H1 (cell line): ENCODE measurements at regions of chr13 and their contacts with region 1.

Region 1: GRCh38 chr13:26698392-26699196 is 62.0 kb downstream of the GPR12 start:
- DNase-seq: peak; percentile 73 to 98
- H3K4me3 ChIP-seq: peak overlapping the region in 1 of 4 experiments; percentile 39; a peak in 2 of 8 replicates
- H3K27ac ChIP-seq: no peak overlapping the region
- H3K4me1 ChIP-seq: peaks cover 0 to 4% (median 1%) of the 10 kb centered on the region in 4 experiments; a peak in 1 of 7 replicates
- H3K27me3 ChIP-seq: no peaks in the 10 kb centered on the region
- CTCF ChIP-seq: peak; percentile 86 to 96 (median 95)
- EP300 ChIP-seq: no peak
- POLR2A ChIP-seq: no peak
- RAD21 ChIP-seq: peak; percentile 98 to 99

Region 2: DNA sequence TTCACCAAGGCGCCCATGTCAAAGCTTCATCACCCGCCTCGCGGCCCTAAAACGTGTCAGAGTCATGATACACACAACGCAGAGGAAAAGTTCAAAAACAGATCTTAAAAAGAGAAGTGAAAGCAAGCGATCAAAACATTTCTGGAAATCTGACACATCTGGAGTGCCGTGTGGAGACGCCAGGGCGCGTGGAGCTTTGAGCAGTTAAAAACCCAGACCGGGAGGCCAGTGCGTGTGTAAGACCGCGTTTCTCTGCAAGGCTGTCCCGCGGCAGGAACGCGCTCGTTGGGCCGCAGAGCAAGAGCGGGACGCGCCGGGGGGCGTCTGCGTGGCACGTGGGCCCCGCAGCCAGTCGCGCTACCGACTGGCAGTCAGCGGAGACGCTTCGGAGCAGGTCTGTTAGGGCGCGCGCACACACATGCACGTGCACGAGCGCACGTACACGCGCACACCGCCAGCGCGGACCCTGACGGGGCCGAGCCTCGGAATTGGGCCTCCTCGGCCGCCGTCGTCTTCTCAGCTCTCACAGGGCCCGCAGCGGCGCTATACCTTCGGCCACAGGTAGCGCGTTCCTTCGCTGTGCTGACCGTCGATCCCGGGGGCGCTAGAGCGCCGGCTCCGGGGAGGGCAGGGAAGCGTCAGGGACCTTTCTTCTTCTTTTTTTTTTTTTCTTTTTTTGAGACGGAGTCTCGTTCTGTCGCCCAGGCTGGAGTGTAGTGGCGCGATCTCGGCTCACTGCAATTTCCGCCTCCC is 512.3 kb before region 1 on chr13:
- CTCF ChIA-PET with region 1: interaction called, 12 read pairs
- POLR2A ChIA-PET with region 1: no interaction called
- DNase-seq: peak; percentile 90 to 91
- H3K4me3 ChIP-seq: peak overlapping the region; percentile 50 to 73 (median 62)
- H3K27ac ChIP-seq: no peak overlapping the region
- H3K4me1 ChIP-seq: peaks cover 0 to 4% (median 1%) of the 10 kb centered on the region in 4 experiments; a peak in 2 of 7 replicates
- H3K27me3 ChIP-seq: peaks cover 0 to 7% (median 1%) of the 10 kb centered on the region in 4 experiments; a peak in 4 of 7 replicates
- CTCF ChIP-seq: peak; percentile 59 to 87 (median 64)
- EP300 ChIP-seq: no peak
- POLR2A ChIP-seq: no peak
- RAD21 ChIP-seq: peak; percentile 38 to 50; a peak in 2 of 4 replicates

Region 3: DNA sequence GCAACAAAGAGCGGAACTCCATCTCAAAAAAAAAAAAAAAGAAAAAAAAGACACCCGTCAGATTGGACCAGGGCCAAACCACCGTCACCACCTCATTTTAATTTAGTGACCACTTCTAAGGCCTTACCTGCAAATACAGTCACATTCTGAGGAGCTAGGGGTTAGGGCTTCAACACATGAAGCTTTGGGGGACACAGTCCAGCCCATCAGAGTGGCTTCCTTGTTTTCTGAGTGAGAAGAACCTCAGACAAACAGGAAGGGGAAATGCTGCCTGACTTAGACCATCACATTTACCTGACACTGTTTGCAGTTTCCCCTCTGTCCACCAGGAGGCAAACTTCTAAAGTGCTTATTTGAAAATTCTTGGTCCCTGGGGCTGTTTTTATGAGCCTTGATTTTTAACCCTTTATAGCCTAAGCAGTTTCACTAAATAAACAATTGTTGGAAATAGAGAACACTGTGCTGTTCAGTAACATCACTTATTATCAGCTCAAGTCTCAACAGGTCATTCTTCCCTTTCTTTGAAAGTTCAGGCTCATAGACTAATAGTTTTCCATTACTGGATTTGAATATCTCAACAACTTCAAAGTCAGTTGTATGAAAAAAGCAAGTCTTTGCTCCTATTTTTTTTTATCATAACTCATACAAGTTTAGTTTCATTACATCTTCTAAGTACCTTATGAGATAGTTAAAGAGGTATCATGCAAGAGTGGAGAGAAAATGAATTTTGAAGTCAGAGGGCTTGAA is 216.0 kb before region 1 on chr13:
- CTCF ChIA-PET with region 1: interaction called, 23 read pairs
- POLR2A ChIA-PET with region 1: no interaction called
- DNase-seq: peak; percentile 47 to 83
- H3K4me3 ChIP-seq: no peak overlapping the region
- H3K27ac ChIP-seq: no peak overlapping the region
- H3K4me1 ChIP-seq: peaks cover 0 to 3% (median under 1%) of the 10 kb centered on the region in 4 experiments; a peak in 3 of 7 replicates
- H3K27me3 ChIP-seq: no peaks in the 10 kb centered on the region
- CTCF ChIP-seq: peak; percentile 6 to 84 (median 76)
- EP300 ChIP-seq: no peak
- POLR2A ChIP-seq: no peak
- RAD21 ChIP-seq: peak; percentile 68 to 80

Region 4: GRCh38 chr13:26656919-26657318 is 41.7 kb before region 1 on chr13:
- CTCF ChIA-PET with region 1: interaction called, 48 read pairs
- POLR2A ChIA-PET with region 1: interaction called, 3 read pairs
- DNase-seq: no peak
- H3K4me3 ChIP-seq: no peak overlapping the region
- H3K27ac ChIP-seq: no peak overlapping the region
- H3K4me1 ChIP-seq: peaks cover 0 to 9% (median 2%) of the 10 kb centered on the region in 4 experiments; a peak in 4 of 7 replicates
- H3K27me3 ChIP-seq: no peaks in the 10 kb centered on the region
- CTCF ChIP-seq: peak in 2 of 3 experiments; percentile 36 to 50; a peak in 2 of 4 replicates
- EP300 ChIP-seq: no peak
- POLR2A ChIP-seq: no peak
- RAD21 ChIP-seq: peak; percentile 26 to 49; a peak in 3 of 4 replicates

Region 5: DNA sequence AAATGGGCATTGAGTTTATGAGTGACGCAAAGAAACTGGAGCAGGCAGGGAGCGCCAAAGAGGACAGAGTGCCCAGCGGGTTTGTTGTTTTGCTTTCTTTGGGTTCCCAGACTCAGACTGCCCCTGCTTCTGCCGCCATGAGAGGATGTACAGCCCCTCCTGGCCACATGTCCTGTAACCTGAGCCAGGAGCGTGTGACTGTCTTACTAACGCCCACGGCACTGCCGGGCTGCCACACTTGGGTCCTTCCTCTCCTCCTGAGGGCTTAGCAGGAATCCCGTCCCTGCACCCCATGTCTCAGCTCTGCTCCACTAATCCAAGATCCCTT is 18.5 kb before region 1 on chr13:
- CTCF ChIA-PET with region 1: interaction called, 13 read pairs
- POLR2A ChIA-PET with region 1: no interaction called
- DNase-seq: no peak
- H3K4me3 ChIP-seq: no peak overlapping the region
- H3K27ac ChIP-seq: no peak overlapping the region
- H3K4me1 ChIP-seq: peaks cover 0 to 5% (median 2%) of the 10 kb centered on the region in 4 experiments; a peak in 3 of 7 replicates
- H3K27me3 ChIP-seq: no peaks in the 10 kb centered on the region
- CTCF ChIP-seq: no peak
- EP300 ChIP-seq: no peak
- POLR2A ChIP-seq: no peak
- RAD21 ChIP-seq: no peak

Region 6: GRCh38 chr13:26929971-26930730 is 231.6 kb after region 1 on chr13:
- CTCF ChIA-PET with region 1: interaction called, 10 read pairs
- POLR2A ChIA-PET with region 1: no interaction called
- DNase-seq: peak; percentile 56 to 96
- H3K4me3 ChIP-seq: peak overlapping the region in 3 of 4 experiments; percentile 20 to 51 (median 23); a peak in 4 of 8 replicates
- H3K27ac ChIP-seq: no peak overlapping the region
- H3K4me1 ChIP-seq: peaks cover 0 to 3% (median 0%) of the 10 kb centered on the region in 4 experiments; a peak in 1 of 7 replicates
- H3K27me3 ChIP-seq: no peaks in the 10 kb centered on the region
- CTCF ChIP-seq: peak; percentile 80 to 86 (median 84)
- EP300 ChIP-seq: no peak
- POLR2A ChIP-seq: no peak; a peak in 1 of 3 replicates
- RAD21 ChIP-seq: peak; percentile 88 to 95